Activated T-helper 1 cell treated with anti-CD3 and anti-CD28 coated beads, Interleukin-12 subunit alpha, Interleukin-12 subunit beta, Interleukin-2, Interleukin-4 antibody, amounts not matched to agents 30 ng/mL and 10 ng/mL and 1 ng/mL, durations not matched to agents 14 hours and 24 hours and 36 hours (primary cell): ENCODE measurements at regions of chr9 and their contacts with region 1.

Region 1: GRCh38 chr9:30140407-30140806 is 2244.0 kb upstream of the ACO1 start:
- DNase-seq: no peak
- H3K4me3 Mint-ChIP-seq: no peak overlapping the region
- H3K27ac Mint-ChIP-seq: no peak overlapping the region
- H3K4me1 Mint-ChIP-seq: no peaks in the 10 kb centered on the region
- H3K27me3 Mint-ChIP-seq: no peaks in the 10 kb centered on the region

Region 2: GRCh38 chr9:29659014-29659413 is 481.4 kb before region 1 on chr9:
- intact Hi-C with region 1: no loop called
- DNase-seq: no peak
- H3K4me3 Mint-ChIP-seq: no peak overlapping the region
- H3K27ac Mint-ChIP-seq: no peak overlapping the region
- H3K4me1 Mint-ChIP-seq: no peaks in the 10 kb centered on the region
- H3K27me3 Mint-ChIP-seq: no peaks in the 10 kb centered on the region

Region 3: DNA sequence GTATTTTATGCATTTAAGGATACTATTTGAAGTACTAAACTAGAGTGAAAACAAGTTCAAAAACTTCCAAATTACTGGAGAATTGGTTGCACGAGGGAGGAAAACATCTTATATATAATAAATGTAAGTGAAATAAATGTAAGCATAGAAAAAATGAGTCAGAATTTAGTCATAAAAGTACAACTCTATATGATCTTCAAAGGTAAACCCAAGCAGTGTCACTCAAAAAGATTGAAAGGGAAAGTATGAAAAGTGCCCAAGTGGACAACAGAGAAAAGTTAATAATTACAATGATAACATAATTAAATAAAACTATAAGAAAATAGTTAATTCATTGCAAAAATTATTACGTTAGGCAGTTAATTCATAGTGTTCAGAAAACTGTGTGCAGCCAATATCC is 278.6 kb before region 1 on chr9:
- intact Hi-C with region 1: no loop called
- DNase-seq: no peak
- H3K4me3 Mint-ChIP-seq: no peak overlapping the region
- H3K27ac Mint-ChIP-seq: no peak overlapping the region
- H3K4me1 Mint-ChIP-seq: no peaks in the 10 kb centered on the region
- H3K27me3 Mint-ChIP-seq: no peaks in the 10 kb centered on the region

Region 4: DNA sequence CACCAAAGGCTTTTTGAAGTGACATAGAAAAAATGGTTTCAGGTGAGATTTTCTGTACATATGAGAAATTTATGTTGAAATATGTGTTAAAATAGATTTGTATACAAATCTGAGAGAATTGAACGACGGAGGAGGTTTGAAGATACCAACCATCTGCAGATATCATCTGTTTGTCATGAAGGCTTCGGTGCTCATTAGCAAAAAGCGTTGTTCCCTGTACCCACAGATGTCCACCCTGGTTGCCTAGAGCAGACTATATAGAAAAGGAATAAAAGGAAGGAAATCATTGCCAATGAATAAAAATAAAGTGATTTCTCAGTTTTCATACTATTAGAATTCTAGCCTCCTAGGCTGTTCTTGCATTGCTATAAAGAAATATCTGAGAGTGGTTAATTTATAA is 18.8 kb before region 1 on chr9:
- intact Hi-C with region 1: no loop called
- DNase-seq: no peak
- H3K4me3 Mint-ChIP-seq: no peak overlapping the region
- H3K27ac Mint-ChIP-seq: no peak overlapping the region
- H3K4me1 Mint-ChIP-seq: no peaks in the 10 kb centered on the region
- H3K27me3 Mint-ChIP-seq: no peaks in the 10 kb centered on the region

Region 5: DNA sequence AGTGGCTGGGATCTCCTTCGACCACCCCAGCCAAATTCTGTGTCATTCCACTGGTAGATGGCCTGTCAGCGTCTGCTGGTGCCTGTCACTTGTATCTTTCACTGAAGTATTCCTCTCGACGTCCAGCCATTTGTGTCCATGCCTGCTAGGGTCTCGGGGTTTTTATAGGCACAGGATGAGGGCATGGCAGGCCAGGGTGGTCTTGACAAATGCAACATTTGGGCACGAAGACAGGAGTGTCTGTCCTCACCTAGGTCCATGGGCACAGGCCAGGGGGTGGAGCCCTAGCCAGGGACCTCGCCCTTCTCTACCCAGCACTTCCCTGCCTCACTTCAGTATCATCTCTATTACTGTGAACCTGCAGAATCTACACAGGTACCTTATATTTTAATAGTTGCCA is 20.2 kb after region 1 on chr9:
- intact Hi-C with region 1: loop called (anchors 2 kb)
- DNase-seq: no peak
- H3K4me3 Mint-ChIP-seq: no peak overlapping the region
- H3K27ac Mint-ChIP-seq: no peak overlapping the region
- H3K4me1 Mint-ChIP-seq: no peaks in the 10 kb centered on the region
- H3K27me3 Mint-ChIP-seq: no peaks in the 10 kb centered on the region